Activated T-helper 1 cell treated with anti-CD3 and anti-CD28 coated beads, Interleukin-12 subunit alpha, Interleukin-12 subunit beta, Interleukin-2, Interleukin-4 antibody, amounts not matched to agents 30 ng/mL and 10 ng/mL and 1 ng/mL, durations not matched to agents 14 hours and 24 hours and 36 hours (primary cell): ENCODE measurements at regions of chr13 and their contacts with region 1.

Region 1: GRCh38 chr13:40666045-40666904 is at the start of gene FOXO1:
- DNase-seq: peak; percentile 88
- H3K4me3 Mint-ChIP-seq: peak within 1 kb of the TSS; percentile 91
- H3K27ac Mint-ChIP-seq: peak within 1 kb of the TSS; percentile 95
- H3K4me1 Mint-ChIP-seq: peaks cover 45% of the 10 kb centered on the region
- H3K27me3 Mint-ChIP-seq: peaks cover 2% of the 10 kb centered on the region
- total RNA-seq, gene FOXO1: 41.9 and 43.1 TPM in 2 replicates

Region 2: DNA sequence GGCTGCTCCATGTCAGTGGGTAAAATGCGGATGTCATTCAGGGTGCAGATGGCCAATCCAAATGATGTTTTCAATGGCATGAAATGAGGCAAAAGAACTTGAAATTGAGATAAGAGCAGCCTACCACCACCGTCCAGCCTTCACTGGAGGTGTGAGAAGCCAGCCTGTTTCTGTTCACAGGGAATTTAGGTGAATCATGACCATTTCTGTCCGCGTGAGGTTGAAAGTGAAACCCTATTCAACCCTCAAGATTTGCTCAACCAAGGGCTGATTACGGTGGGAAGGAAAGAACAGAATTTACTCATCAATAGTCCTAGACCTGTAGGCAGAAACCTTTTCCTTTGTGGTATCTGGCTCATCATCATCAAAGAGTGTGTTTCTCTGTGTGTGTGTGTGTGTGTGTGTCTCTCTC is 640.1 kb before region 1 on chr13:
- intact Hi-C with region 1: loop called (anchors 1 kb)
- DNase-seq: peak; percentile 67
- H3K4me3 Mint-ChIP-seq: peak overlapping the region; percentile 24
- H3K27ac Mint-ChIP-seq: peak overlapping the region; percentile 48
- H3K4me1 Mint-ChIP-seq: peaks cover 59% of the 10 kb centered on the region
- H3K27me3 Mint-ChIP-seq: peaks cover 5% of the 10 kb centered on the region

Region 3: DNA sequence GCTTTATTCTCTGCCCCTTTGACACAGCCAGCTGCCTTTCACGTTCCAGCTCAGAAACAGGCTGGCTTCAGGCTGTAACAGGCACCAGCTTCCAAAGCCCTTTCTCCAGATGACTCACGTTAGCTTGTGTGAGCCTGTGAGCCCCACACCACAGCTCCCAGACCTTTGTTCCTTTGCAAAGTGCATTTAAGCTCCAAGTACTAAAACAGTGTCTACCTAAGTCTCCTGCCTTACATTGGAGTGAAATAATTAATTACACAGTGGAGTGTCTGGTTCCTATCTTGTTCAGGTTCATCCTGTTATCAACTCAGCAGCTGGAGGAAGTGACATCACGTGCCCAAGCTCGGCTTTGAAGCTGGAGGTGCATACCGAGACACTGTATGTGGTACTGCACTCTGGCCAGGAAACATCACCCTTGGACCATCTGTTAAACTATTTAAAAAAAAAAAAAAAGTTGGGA is 475.6 kb before region 1 on chr13:
- intact Hi-C with region 1: loop called (anchors 1 kb)
- DNase-seq: peak; percentile 58
- H3K4me3 Mint-ChIP-seq: peak overlapping the region; percentile 35
- H3K27ac Mint-ChIP-seq: peak overlapping the region; percentile 87
- H3K4me1 Mint-ChIP-seq: peaks cover 66% of the 10 kb centered on the region
- H3K27me3 Mint-ChIP-seq: no peaks in the 10 kb centered on the region

Region 4: DNA sequence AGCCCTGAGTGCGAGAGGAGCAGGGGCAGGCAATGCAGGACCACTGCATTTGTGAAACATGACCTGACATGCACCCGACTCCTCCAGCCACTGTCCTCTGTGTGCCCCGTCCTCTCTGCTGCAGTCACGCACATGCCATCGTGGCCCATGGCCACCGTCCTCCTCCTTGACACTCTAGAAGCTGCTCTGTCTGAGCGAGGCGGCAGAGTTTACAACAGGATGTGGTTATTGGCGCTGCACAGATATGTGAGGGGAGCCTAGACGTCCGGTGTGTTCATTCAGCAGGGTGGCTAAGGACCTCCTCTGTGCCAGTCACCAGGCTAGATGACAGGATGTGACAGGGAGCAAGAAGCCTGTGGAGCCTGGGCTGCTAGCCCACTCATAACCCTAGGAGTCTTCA is 277.7 kb before region 1 on chr13:
- intact Hi-C with region 1: loop called (anchors 1 kb)
- DNase-seq: peak; percentile 79
- H3K4me3 Mint-ChIP-seq: peak overlapping the region; percentile 76
- H3K27ac Mint-ChIP-seq: peak overlapping the region; percentile 96
- H3K4me1 Mint-ChIP-seq: peaks cover 56% of the 10 kb centered on the region
- H3K27me3 Mint-ChIP-seq: no peaks in the 10 kb centered on the region

Region 5: DNA sequence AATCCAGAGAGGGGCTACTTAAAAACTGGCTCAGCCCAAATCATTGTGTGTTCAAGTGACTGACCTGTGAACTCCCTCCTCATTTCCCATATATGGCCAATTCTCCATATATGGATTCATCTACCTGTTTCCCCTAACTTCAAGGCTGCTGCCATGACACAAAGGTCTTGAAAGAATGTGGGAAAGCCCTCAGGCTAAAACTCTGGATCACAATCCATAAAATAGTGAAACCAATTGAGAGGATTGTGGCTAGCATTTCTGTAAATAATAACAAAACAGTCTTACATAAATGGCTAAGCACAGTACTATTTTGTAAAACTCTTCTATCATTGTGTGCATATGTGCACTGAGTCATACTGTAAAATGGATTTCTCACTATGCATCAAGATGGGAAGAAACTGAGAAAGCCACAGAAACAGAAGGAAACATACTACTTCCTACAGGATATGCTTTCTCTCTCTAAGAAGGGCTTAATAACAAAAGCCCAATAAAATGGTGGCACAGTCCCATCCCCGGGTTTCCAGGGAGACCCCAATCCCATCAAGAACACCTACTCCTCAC is 80.3 kb before region 1 on chr13:
- intact Hi-C with region 1: loop called (anchors 1 kb)
- DNase-seq: no peak
- H3K4me3 Mint-ChIP-seq: no peak overlapping the region
- H3K27ac Mint-ChIP-seq: no peak overlapping the region
- H3K4me1 Mint-ChIP-seq: peaks cover 88% of the 10 kb centered on the region
- H3K27me3 Mint-ChIP-seq: no peaks in the 10 kb centered on the region

Region 6: GRCh38 chr13:40770934-40771618 is 104.8 kb after region 1 on chr13 and contains the start of gene MRPS31:
- intact Hi-C with region 1: loop called (anchors 1 kb)
- DNase-seq: peak; percentile 93
- H3K4me3 Mint-ChIP-seq: peak within 1 kb of the TSS; percentile 99
- H3K27ac Mint-ChIP-seq: peak within 1 kb of the TSS; percentile 98
- H3K4me1 Mint-ChIP-seq: peaks cover 29% of the 10 kb centered on the region
- H3K27me3 Mint-ChIP-seq: no peaks in the 10 kb centered on the region
- total RNA-seq, gene MRPS31: 41.6 and 42.6 TPM in 2 replicates

Region 7: DNA sequence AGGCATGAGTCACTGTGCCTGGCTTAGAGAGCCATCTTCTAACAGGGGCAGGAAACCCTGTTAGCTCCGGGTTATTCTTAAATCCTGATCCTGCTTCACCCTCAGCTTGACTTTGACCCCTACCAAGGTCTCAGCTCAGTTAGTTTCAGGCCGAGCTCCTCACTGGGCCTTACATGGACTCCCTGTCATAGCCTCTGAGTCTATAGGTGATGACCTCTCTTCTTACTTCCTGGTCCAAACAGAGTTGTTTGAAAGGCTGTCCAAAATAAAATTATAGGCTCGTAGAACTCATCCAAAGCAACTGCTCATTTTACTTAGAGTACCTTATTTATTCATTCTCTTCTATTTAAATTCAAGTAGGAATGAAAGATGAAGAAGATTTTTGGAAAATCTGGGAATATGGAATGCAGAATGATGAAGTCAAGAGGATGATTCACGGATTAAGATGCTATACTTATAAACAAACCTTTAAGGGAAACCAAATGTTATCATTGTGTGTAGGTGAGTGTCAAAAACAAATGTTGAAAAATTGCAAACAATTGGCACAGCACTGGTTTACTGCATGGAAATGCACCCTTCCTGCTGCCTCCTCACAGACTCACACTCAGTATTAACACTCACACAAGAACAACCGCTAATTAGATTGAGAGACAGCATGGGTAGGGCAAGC is 965.2 kb after region 1 on chr13:
- intact Hi-C with region 1: no loop called
- DNase-seq: no peak
- H3K4me3 Mint-ChIP-seq: no peak overlapping the region
- H3K27ac Mint-ChIP-seq: no peak overlapping the region
- H3K4me1 Mint-ChIP-seq: no peaks in the 10 kb centered on the region
- H3K27me3 Mint-ChIP-seq: no peaks in the 10 kb centered on the region

Region 8: DNA sequence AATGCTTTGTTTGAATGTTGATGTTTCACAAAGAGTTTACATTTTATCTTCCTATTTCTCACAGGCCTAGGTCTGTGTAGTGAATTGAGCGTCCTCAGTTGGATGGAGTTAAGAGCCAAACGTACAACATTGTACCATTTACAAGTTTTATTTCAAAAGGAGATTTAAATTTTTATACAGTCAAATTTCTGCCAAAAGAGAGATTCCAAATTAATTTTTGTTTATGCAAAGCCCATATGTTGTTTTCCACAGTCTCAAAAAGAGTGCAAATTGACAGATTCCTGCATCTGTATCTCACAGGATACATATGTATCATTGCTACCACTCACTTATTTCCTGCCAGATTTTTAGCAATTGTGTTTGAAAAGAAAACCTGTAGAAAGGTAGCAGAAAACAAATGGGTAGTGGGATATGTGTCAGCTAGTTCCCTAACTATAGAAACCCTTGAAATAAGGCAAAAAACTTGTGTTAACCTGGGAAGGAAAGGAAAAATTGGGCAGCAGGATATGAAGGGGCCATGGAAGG is 1428.3 kb after region 1 on chr13:
- intact Hi-C with region 1: no loop called
- DNase-seq: no peak
- H3K4me3 Mint-ChIP-seq: no peak overlapping the region
- H3K27ac Mint-ChIP-seq: no peak overlapping the region
- H3K4me1 Mint-ChIP-seq: no peaks in the 10 kb centered on the region
- H3K27me3 Mint-ChIP-seq: no peaks in the 10 kb centered on the region